SK-N-SH (cell line): ENCODE measurements at regions of chr7 and their contacts with region 1.

Region 1: DNA sequence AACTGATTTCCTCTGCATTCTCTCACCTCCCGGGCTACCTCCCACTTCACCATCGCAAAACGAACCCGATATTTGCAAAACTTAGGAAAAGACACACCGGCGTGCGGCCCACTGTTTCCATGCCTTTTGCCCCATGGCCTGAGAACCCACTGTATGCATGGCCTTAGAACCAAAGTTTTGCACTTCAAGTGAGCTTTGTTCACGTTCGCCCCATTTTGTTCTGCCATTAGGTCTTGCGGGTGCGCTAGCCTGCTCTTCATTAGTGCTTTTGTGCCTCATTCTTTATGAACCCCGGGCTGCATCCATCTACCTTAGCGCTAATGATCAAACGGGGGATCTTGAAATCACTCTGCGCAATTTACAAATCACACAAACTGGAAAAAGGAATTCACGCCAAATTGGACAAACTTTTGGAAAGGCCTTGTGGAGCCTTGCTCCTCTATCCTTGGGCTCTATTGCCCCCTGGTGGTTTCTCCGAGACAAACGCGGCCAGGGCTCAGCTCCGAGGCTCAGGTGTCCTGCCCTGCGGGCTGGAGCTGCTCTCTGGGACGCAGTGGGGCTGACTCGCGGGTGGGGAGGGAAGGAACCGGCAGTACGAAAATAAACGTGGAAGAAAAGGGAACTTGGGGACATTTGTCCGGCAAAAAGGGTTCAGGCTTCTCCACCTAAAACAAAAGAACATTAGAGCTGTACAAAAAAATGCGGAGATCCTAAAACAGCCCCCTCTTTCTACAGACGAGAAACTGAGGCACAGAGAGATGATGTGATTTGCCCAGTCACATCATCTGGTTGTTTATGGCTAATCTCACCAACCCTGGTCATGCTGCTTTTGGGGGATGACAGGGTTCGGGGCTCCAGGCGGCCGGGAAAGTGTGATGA is 300.4 kb upstream of the NFE2L3 start:
- DNase-seq: peak; percentile 81
- H3K4me3 ChIP-seq: peak overlapping the region; percentile 21 to 38; a peak in 2 of 4 replicates
- H3K27ac ChIP-seq: no peak overlapping the region
- H3K4me1 ChIP-seq: peaks cover 0 to 24% of the 10 kb centered on the region in 2 experiments; a peak in 2 of 4 replicates
- H3K27me3 ChIP-seq: peaks cover 49% of the 10 kb centered on the region
- CTCF ChIP-seq: peak; percentile 92
- EP300 ChIP-seq: no peak
- RAD21 ChIP-seq: peak; percentile 99

Region 2: GRCh38 chr7:25216837-25217236 is 634.7 kb before region 1 on chr7:
- CTCF ChIA-PET with region 1: interaction called, 11 read pairs
- POLR2A ChIA-PET with region 1: no interaction called
- DNase-seq: peak; percentile 48
- H3K4me3 ChIP-seq: no peak overlapping the region; a peak in 1 of 4 replicates
- H3K27ac ChIP-seq: no peak overlapping the region
- H3K4me1 ChIP-seq: peaks cover 0 to 2% of the 10 kb centered on the region in 2 experiments; a peak in 1 of 4 replicates
- H3K27me3 ChIP-seq: peaks cover 8% of the 10 kb centered on the region; the same call in 1 of the 2 replicates
- CTCF ChIP-seq: peak; percentile 99
- EP300 ChIP-seq: no peak
- RAD21 ChIP-seq: peak; percentile 49; the same call in 1 of the 2 replicates

Region 3: DNA sequence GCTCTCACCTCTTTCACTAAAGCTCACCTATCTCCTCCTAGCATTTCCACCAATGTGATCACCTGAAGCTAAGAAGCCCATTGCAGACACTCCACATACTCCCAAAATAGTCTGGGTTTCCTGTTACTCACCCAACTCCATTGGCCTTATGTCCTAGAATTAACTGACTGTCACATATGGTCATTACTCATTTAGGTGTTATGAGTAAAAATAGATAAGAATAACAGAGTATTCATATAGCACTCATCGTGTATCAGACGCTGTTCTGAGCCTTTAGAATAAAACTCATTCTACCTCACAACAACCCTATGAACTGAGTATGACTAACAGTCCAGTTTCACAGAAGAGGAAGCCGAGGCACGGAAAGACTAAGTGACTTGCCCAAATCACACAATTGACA is 449.0 kb before region 1 on chr7:
- CTCF ChIA-PET with region 1: interaction called, 401 read pairs
- POLR2A ChIA-PET with region 1: no interaction called
- DNase-seq: no peak
- H3K4me3 ChIP-seq: no peak overlapping the region
- H3K27ac ChIP-seq: no peak overlapping the region
- H3K4me1 ChIP-seq: peaks cover 0 to 9% of the 10 kb centered on the region in 2 experiments; a peak in 2 of 4 replicates
- H3K27me3 ChIP-seq: no peaks in the 10 kb centered on the region
- CTCF ChIP-seq: no peak
- EP300 ChIP-seq: no peak
- RAD21 ChIP-seq: no peak

Region 4: DNA sequence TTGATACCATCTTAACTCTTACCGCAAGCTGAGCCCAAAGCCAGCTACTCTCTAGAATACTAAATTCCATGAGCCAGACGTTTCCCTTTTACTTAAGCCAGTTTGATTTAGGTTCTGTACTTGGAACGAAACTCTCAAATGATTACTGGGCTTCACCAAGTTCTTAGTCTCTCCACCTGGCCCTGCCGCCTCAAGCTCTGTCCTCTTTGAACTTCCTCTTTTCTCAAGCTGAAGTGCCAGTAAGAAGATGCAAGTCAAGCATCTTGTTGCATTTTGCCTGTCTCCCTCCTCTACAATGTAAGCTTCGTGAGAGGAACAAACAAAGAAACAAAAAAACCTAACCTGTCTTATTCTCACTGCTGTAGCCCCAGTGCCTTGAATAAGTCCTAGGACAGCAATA is 265.1 kb before region 1 on chr7:
- CTCF ChIA-PET with region 1: interaction called, 12 read pairs
- POLR2A ChIA-PET with region 1: no interaction called
- DNase-seq: no peak
- H3K4me3 ChIP-seq: no peak overlapping the region
- H3K27ac ChIP-seq: no peak overlapping the region
- H3K4me1 ChIP-seq: no peaks in the 10 kb centered on the region; a peak in 1 of 4 replicates
- H3K27me3 ChIP-seq: no peaks in the 10 kb centered on the region
- CTCF ChIP-seq: no peak
- EP300 ChIP-seq: no peak
- RAD21 ChIP-seq: no peak

Region 5: DNA sequence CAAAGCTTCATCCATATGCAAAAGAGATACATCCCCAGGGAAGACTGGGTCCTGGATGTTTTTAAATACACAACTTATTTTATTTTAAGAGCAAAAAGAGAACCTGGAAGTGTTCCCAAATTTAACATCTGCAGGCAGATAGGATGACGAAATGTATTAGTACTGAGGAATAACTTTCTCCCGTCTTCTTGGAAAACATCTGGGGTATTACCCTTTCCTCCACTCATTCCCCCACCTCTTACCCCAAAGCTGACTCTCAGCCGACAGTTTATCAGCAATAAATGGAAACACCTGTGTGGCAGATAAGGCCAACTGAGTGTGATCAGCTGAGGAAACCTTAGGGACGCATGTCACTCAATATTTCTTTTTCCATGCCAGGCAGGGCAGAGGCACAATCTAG is 187.7 kb before region 1 on chr7:
- CTCF ChIA-PET with region 1: interaction called, 31 read pairs
- POLR2A ChIA-PET with region 1: no interaction called
- DNase-seq: no peak
- H3K4me3 ChIP-seq: no peak overlapping the region
- H3K27ac ChIP-seq: peak overlapping the region in 1 of 2 experiments; percentile 53; a peak in 2 of 4 replicates
- H3K4me1 ChIP-seq: peaks cover 0 to 55% of the 10 kb centered on the region in 2 experiments; a peak in 2 of 4 replicates
- H3K27me3 ChIP-seq: no peaks in the 10 kb centered on the region
- CTCF ChIP-seq: no peak
- EP300 ChIP-seq: peak in 1 of 2 experiments; percentile 68; a peak in 2 of 4 replicates
- RAD21 ChIP-seq: no peak

Region 6: DNA sequence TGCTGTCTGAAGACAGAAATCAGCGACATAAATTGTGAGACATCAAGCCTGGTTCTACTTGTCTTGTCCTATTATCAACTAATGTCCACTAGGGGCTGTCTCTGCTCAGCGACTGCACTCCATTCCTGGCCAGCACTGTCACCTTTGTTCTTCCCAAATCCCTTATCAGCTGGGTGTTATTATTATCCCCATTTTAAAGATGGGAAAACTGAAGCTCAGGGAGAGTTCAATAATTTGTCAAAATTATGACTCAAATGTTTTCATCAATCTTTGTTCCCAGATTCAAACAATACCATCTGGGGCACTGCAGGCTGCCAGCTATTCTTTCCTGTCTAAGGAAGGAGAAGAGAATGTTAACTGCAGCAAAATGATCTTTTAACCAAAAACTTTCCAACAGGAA is 131.1 kb before region 1 on chr7:
- CTCF ChIA-PET with region 1: interaction called, 13 read pairs
- POLR2A ChIA-PET with region 1: no interaction called
- DNase-seq: peak; percentile 39
- H3K4me3 ChIP-seq: no peak overlapping the region
- H3K27ac ChIP-seq: no peak overlapping the region
- H3K4me1 ChIP-seq: no peaks in the 10 kb centered on the region
- H3K27me3 ChIP-seq: no peaks in the 10 kb centered on the region
- CTCF ChIP-seq: no peak; the same call in 1 of the 2 replicates
- EP300 ChIP-seq: no peak
- RAD21 ChIP-seq: peak; percentile 59

Region 7: DNA sequence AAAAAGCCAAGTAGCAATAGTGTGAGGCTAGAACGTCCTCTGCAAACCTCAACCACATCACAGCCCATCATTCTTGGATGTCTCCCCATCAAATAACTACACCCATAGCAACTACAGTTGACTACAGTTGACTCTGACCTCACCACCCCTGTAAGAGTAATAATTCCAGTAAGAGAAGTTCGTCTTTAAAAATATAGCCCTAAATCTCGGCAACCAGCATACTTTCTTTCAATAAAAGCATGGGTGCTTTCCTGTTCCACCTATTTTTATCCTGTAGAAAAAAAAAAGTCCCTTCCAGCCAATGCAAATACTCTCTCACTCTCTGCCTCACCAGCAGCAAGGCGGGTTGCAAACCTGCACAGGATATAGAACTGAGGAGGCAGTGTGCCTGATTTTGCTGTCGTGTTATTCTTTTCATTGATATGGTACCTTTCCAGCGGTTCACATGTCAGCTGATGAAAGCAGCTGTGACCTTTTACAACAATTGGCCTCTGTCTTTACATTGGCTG is 113.0 kb after region 1 on chr7:
- CTCF ChIA-PET with region 1: no interaction called
- POLR2A ChIA-PET with region 1: no interaction called
- DNase-seq: no peak
- H3K4me3 ChIP-seq: no peak overlapping the region
- H3K27ac ChIP-seq: no peak overlapping the region
- H3K4me1 ChIP-seq: no peaks in the 10 kb centered on the region
- H3K27me3 ChIP-seq: peaks cover 6% of the 10 kb centered on the region
- CTCF ChIP-seq: no peak
- EP300 ChIP-seq: no peak
- RAD21 ChIP-seq: no peak